Aorta (tissue), 5 donors: ENCODE measurements at regions of chr1 and their contacts with region 1.

Region 1: GRCh38 chr1:151443846-151444782 is 15.2 kb downstream of the POGZ start:
- DNase-seq: no peak
- ATAC-seq: peak; percentile 88
- H3K4me3 ChIP-seq: no peak overlapping the region
- H3K27ac ChIP-seq: no peak overlapping the region
- H3K4me1 ChIP-seq: peaks cover 0 to 2% of the 10 kb centered on the region in 2 donors
- H3K27me3 ChIP-seq: no peaks in the 10 kb centered on the region

Region 2: DNA sequence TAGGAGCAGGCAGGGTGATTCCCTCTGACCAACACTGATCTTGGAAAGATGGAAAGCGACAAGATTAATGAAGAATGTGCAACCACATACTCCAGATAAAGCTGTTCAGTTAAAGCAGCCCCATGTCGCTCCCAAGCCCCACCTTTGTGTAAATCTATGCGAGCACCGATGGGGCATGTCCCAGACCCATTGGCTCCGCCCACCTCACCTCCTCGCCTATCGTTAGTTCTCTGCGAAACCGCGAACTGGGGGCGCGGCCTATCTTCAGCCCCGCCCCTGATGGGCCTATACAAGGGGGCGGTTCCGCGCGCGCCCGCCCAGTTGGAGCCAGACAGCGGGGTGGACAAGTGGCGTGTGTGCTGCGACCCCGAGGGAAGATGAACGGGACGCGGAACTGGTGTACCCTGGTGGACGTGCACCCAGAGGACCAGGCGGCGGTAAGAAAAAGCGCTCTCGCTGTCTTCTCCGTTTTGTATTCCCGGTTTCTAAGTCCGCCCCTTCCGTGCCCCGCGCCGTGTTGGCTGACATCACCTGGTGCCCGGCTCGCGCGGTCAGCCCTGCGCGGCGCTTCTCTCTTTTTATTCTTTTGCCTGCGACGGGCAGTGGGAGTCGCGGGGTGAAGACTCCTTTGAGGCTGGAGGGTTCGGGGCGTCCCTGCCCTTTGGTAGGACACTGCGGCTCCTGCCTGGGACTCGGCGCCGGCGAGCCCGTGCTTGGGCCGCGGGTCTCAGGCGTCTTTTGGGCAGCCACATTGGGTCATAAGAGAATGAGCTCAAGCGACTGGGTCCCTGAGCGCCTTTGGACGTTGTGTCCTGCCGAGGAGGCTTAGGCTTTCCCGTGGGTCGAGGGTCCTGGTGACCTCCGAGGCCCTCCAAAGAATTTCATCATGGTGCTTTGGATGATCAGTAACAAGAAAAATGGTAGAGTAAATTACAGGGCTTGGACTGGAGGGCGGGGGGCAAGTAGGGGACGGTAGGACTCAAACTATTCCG is 96.2 kb after region 1 on chr1 and contains the start of gene TUFT1:
- intact Hi-C with region 1: loop called in 1 of 2 experiments (anchors 10 kb)
- DNase-seq: peak; percentile 96 to 97
- ATAC-seq: peak; percentile 95
- H3K4me3 ChIP-seq: peak within 1 kb of the TSS; percentile 51
- H3K27ac ChIP-seq: peak within 1 kb of the TSS in 1 of 2 donors; percentile 23
- H3K4me1 ChIP-seq: no peaks in the 10 kb centered on the region
- H3K27me3 ChIP-seq: no peaks in the 10 kb centered on the region
- total RNA-seq, gene TUFT1: 6.5 to 11.2 TPM

Region 3: GRCh38 chr1:151728151-151729054 is 284.3 kb after region 1 on chr1:
- intact Hi-C with region 1: loop called in 1 of 2 experiments (anchors 5 kb)
- DNase-seq: no peak
- ATAC-seq: peak; percentile 77
- H3K4me3 ChIP-seq: peak overlapping the region in 1 of 2 donors; percentile 14
- H3K27ac ChIP-seq: peak overlapping the region in 1 of 2 donors; percentile 32
- H3K4me1 ChIP-seq: no peaks in the 10 kb centered on the region
- H3K27me3 ChIP-seq: no peaks in the 10 kb centered on the region

Region 4: GRCh38 chr1:151739590-151740375 is 295.7 kb after region 1 on chr1:
- intact Hi-C with region 1: loop called in 1 of 2 experiments (anchors 5 kb)
- DNase-seq: no peak
- ATAC-seq: no peak
- H3K4me3 ChIP-seq: no peak overlapping the region
- H3K27ac ChIP-seq: no peak overlapping the region
- H3K4me1 ChIP-seq: no peaks in the 10 kb centered on the region
- H3K27me3 ChIP-seq: no peaks in the 10 kb centered on the region